Activated naive CD4-positive, alpha-beta T cell treated with anti-CD3 and anti-CD28 coated beads for 36 hours (primary cell): ENCODE measurements at regions of chr1 and their contacts with region 1.

Region 1: DNA sequence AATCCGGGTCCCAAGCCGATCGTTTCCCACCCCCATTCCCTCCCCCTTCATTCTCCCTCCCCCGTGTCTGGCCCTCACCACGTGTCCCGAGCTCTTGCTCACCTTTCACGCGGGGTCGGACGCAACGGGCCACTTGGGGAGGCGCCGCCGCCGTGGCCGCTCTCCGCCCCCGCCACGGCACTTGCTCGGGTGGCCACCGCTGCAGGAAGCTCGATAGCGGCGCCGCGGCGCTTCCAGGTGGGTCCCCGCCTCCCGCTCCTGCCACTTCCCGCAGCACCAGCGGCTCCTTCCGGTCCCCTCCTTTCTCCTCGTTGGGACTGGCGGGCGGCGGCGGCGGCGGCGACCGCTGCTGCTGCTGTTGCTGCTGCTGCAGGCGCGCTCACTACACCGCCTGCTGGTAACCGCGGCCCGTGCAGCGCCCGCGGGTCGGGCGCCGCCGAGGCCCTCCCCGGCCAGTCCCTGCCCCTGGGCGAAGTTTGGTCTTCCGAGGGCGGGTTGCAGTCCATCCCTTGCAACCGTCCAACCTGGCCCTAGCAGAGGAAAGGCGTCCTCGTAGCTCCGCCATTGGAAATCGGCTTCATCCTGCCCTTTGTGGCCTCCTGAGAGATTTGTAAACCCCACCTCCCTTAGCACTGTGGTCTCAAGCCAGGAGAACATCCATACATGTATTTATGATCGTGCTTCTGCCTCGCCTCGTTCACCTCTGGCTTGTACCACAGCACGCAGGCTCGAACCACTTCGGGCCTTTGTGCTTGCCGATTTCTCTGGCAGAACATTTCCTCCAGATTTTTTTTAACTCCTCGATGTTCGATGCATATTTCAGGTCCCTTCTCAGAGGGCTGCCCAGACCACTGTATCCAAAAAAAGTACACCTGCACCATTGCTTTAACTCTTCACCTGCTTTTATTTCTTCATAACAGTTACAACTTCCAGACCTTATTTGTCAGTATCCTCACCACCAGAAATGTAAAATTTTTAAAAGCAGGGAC is 996 bp upstream of the ZZZ3 start:
- DNase-seq: peak; percentile 94
- H3K4me3 Mint-ChIP-seq: peak overlapping the region; percentile 82
- H3K27ac Mint-ChIP-seq: peak overlapping the region; percentile 90
- H3K4me1 Mint-ChIP-seq: peaks cover 30% of the 10 kb centered on the region
- H3K27me3 Mint-ChIP-seq: no peaks in the 10 kb centered on the region

Region 2: DNA sequence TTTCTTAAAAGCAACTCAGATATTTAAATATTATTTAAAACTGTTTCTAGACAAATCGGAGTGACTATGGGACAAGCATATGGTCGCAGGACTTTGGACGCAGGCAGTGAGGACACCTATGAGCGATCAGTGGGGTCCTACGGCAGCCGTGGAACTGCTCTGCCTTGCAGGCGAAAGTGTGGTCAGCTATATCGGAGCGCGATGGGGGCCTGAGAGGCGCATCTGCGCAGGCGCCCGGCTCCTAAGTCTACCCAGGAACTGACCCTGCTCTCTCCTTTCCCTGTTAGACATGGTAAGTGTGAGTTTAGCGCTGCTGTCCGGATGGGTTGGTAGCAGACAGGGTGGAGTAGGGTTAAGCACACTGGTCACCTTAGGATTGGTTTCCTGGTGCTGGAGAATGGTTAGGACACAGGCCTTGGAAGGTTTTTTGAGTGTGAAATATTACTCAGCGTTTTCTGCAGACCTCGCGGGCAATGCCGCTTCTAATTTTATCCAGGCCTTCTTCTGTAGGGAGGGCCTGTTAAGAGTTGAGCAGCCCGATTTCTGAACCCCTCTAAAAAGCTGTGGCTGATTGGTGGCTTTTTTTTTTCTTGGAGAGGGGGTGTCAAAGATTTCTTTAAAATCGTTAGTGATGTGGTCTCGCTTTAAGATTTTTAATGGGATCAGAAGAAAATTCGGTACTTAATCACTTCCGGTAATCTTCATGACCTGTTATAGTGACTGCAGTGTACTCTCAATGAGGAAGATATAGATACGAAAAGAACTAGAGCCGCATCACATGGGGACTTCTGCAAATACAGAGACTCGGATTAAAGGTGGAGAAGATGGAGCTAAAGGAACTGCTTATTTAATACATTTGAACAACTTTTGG is 1897.2 kb before region 1 on chr1 and contains the start of gene RABGGTB:
- CTCF ChIA-PET with region 1: no interaction called
- intact Hi-C with region 1: loop called (anchors 1 kb)
- DNase-seq: peak; percentile 96
- H3K4me3 Mint-ChIP-seq: peak within 1 kb of the TSS; percentile 99
- H3K27ac Mint-ChIP-seq: peak within 1 kb of the TSS; percentile 99
- H3K4me1 Mint-ChIP-seq: peaks cover 24% of the 10 kb centered on the region
- H3K27me3 Mint-ChIP-seq: no peaks in the 10 kb centered on the region
- total RNA-seq, gene RABGGTB: 158 to 162 TPM

Region 3: DNA sequence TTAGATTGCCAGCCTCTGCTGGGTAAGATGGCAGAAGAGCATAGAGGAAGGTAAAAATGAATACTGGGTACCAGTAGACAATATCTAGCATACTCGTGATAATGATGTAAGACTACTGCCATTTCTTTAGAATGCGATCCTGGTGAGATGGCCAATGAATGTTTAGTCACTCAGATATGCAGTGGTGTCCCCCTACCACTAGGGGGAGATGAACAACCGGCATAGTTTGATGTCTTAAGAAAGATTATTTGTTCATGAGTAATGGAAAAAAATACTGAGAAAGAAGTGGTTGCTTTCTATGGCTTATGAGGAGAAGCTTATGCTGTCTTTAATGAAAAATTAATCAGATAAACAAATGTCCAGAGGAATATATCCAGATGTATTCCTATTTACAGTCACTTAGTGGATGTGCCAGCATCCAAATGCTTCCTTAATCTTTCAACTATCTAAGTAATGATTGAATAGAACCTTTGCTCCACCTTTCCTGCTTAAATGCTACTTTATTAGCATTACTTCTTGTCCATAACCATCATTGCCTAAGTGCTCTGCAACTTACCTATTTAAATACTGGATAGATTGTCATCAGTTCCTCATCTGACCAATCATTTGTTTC is 1352.4 kb before region 1 on chr1:
- CTCF ChIA-PET with region 1: no interaction called
- intact Hi-C with region 1: loop called (anchors 5 kb)
- DNase-seq: peak; percentile 68
- H3K4me3 Mint-ChIP-seq: no peak overlapping the region
- H3K27ac Mint-ChIP-seq: no peak overlapping the region
- H3K4me1 Mint-ChIP-seq: peaks cover 14% of the 10 kb centered on the region
- H3K27me3 Mint-ChIP-seq: no peaks in the 10 kb centered on the region

Region 4: GRCh38 chr1:77281491-77282186 is 401.8 kb before region 1 on chr1 and contains the start of gene AK5:
- CTCF ChIA-PET with region 1: no interaction called
- intact Hi-C with region 1: loop called (anchors 2 kb)
- DNase-seq: peak; percentile 58
- H3K4me3 Mint-ChIP-seq: peak within 1 kb of the TSS; percentile 75
- H3K27ac Mint-ChIP-seq: no peak within 1 kb of the TSS
- H3K4me1 Mint-ChIP-seq: peaks cover 37% of the 10 kb centered on the region
- H3K27me3 Mint-ChIP-seq: no peaks in the 10 kb centered on the region
- total RNA-seq, gene AK5: 7.0 to 9.1 TPM

Region 5: DNA sequence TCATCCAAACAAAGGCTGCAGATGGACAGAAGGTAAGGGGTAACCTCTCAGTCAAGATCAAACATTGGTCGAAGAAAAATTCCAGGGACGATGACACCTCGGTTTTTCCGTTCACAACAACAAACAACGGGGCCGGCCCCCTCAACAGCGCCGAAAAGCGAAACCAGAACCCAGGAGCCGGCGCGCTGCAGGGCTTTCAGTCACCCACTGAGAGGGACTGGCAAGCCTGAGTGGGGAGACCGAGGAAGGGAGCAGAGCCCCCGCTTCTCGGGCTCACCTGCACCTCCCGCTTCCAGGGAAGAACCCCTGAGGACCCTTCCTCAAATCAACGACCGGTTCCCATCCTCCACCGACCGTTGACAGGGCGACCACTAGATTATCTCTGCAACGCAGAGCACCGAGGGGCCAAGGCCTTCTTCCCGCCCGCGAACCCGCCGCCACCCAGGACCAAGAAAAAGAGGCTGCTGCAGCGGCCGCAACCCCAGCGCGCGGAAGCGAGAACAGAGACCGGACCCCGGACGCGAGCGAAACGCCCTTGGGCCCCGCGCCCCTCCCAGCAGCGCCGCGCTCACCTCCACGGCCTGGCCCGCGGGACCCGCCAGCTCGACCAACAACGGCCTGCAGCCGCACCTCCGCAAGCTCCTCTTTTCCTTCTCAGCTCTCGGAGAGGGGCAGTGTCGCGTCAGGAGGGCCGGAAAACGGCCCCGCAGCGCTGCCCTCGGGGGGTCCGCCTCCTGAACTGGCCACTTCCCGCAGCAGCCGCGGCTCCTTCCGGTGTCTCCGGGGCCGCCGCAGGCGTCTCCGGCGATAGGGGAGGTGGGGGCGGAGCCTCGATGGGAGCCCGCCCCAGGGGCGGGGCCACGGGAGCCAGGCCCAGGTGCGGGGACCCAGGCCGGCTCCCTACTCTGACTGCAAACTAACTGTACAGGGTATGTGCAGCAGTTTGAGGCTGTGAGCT is 75.9 kb after region 1 on chr1 and contains the start of gene USP33:
- CTCF ChIA-PET with region 1: no interaction called
- intact Hi-C with region 1: loop called (anchors 1 kb)
- DNase-seq: peak; percentile 93
- H3K4me3 Mint-ChIP-seq: peak within 1 kb of the TSS; percentile 90
- H3K27ac Mint-ChIP-seq: peak within 1 kb of the TSS; percentile 93
- H3K4me1 Mint-ChIP-seq: peaks cover 46% of the 10 kb centered on the region
- H3K27me3 Mint-ChIP-seq: no peaks in the 10 kb centered on the region
- total RNA-seq, gene USP33: 32.6 to 35.6 TPM

Region 6: GRCh38 chr1:78114034-78114956 is 430.8 kb after region 1 on chr1:
- CTCF ChIA-PET with region 1: interaction called, 4 read pairs
- intact Hi-C with region 1: loop called (anchors 1 kb)
- DNase-seq: peak; percentile 79
- H3K4me3 Mint-ChIP-seq: no peak overlapping the region
- H3K27ac Mint-ChIP-seq: no peak overlapping the region
- H3K4me1 Mint-ChIP-seq: peaks cover 8% of the 10 kb centered on the region
- H3K27me3 Mint-ChIP-seq: no peaks in the 10 kb centered on the region